Psoas muscle (tissue), 8 donors: ENCODE measurements at regions of chr1 and their contacts with region 1.

Region 1: GRCh38 chr1:1730870-1731269 is 6.7 kb upstream of the CDK11A start:
- DNase-seq: no peak
- ATAC-seq: no peak
- H3K4me3 ChIP-seq: no peak overlapping the region
- H3K27ac ChIP-seq: no peak overlapping the region
- H3K4me1 ChIP-seq: peaks cover 10% of the 10 kb centered on the region
- H3K27me3 ChIP-seq: no peaks in the 10 kb centered on the region
- CTCF ChIP-seq: no peak

Region 2: GRCh38 chr1:1665800-1666251 is 65.0 kb before region 1 on chr1:
- intact Hi-C with region 1: loop called in 1 of 2 experiments (anchors 1 kb)
- DNase-seq: no peak
- ATAC-seq: peak in 1 of 4 donors; percentile 44
- H3K4me3 ChIP-seq: no peak overlapping the region
- H3K27ac ChIP-seq: no peak overlapping the region
- H3K4me1 ChIP-seq: peaks cover 12% of the 10 kb centered on the region
- H3K27me3 ChIP-seq: no peaks in the 10 kb centered on the region
- CTCF ChIP-seq: peak; percentile 33